Ovary (tissue), 10 donors: ENCODE measurements at regions of chr11 and their contacts with region 1.

Region 1: GRCh38 chr11:64317957-64318693 is at the start of gene PRDX5:
- DNase-seq: peak; percentile 94 to 96 (median 95)
- H3K4me3 ChIP-seq: peak within 1 kb of the TSS; percentile 65
- H3K27ac ChIP-seq: peak within 1 kb of the TSS; percentile 81 to 99
- H3K4me1 ChIP-seq: peaks cover 9% of the 10 kb centered on the region
- H3K27me3 ChIP-seq: no peaks in the 10 kb centered on the region
- CTCF ChIP-seq: peak; percentile 11 to 72 (median 65)
- EP300 ChIP-seq: no peak
- POLR2A ChIP-seq: peak; percentile 93
- total RNA-seq, gene PRDX5: 160 to 400 (median 192) TPM

Region 2: GRCh38 chr11:63829823-63830489 is 488.2 kb before region 1 on chr11:
- intact Hi-C with region 1: no loop called
- DNase-seq: no peak
- H3K4me3 ChIP-seq: no peak overlapping the region
- H3K27ac ChIP-seq: no peak overlapping the region
- H3K4me1 ChIP-seq: no peaks in the 10 kb centered on the region
- H3K27me3 ChIP-seq: no peaks in the 10 kb centered on the region
- CTCF ChIP-seq: no peak
- EP300 ChIP-seq: no peak
- POLR2A ChIP-seq: no peak

Region 3: DNA sequence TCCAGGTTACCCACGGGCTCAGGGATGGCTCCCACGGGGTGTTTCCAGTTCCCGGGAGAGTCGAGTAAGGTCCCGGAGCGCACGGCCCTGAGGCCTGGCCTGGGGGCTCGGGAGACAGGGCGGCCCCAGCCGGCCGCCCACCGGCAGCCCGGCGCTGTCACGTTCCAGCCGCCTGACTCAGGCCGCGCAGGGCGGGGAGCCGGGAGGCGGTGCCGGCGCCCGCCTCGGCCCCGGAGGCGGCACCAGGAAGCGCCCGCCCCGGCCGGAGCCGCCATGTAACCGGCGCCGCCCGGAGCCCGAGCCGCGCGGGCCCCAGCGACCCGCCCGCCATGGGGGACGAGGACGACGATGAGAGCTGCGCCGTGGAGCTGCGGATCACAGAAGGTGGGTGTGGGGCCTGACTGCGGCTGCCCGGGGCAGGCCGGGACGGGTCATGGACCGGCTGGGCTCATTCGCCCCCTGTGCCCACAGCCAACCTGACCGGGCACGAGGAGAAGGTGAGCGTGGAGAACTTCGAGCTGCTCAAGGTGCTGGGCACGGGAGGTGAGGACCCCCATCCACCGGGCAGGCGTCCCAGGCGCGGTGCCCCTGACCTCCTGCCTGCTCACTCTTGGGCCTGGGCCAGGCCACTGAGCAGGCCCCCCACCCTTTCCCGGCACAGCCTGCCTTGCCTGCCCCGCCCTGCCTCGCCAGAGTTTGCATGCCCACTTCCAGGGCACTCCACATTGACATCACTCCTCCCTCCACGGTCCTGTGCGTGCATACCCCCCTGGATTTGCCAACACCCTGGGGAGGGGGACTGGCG is 41.0 kb after region 1 on chr11 and contains the start of gene RPS6KA4:
- intact Hi-C with region 1: loop called in 1 of 4 experiments (anchors 5 kb)
- DNase-seq: peak; percentile 60 to 76 (median 65)
- H3K4me3 ChIP-seq: peak within 1 kb of the TSS; percentile 55
- H3K27ac ChIP-seq: peak within 1 kb of the TSS; percentile 59 to 68
- H3K4me1 ChIP-seq: peaks cover 15% of the 10 kb centered on the region
- H3K27me3 ChIP-seq: no peaks in the 10 kb centered on the region
- CTCF ChIP-seq: peak in 1 of 3 donors; percentile 28
- EP300 ChIP-seq: no peak
- POLR2A ChIP-seq: peak; percentile 15
- total RNA-seq, gene RPS6KA4: 7.3 to 31.4 (median 16.9) TPM

Region 4: DNA sequence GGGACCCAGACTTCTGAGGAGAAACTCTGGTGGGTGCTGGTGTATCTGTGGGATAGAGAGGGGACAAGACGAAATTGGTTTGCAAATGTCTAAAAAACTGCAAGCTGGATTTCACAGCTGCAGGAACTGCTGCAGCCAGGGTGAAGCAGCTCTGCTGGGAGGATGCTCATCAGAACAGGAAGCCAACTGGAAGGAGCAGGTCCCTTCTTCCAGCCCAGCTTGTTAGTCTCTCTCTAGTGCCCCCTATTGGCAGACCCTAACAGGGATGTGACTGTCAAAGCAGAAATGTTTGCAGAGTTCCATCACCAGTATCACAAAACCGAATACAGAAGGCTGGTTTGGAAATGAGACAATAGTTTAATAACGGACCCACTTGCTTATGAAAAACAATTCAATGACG is 198.1 kb after region 1 on chr11:
- intact Hi-C with region 1: no loop called
- DNase-seq: no peak
- H3K4me3 ChIP-seq: no peak overlapping the region
- H3K27ac ChIP-seq: no peak overlapping the region
- H3K4me1 ChIP-seq: no peaks in the 10 kb centered on the region
- H3K27me3 ChIP-seq: no peaks in the 10 kb centered on the region
- CTCF ChIP-seq: no peak
- EP300 ChIP-seq: no peak
- POLR2A ChIP-seq: no peak